Activated CD4-positive, alpha-beta T cell treated with anti-CD3 and anti-CD28 coated beads for 36 hours (primary cell): ENCODE measurements at regions of chr17 and their contacts with region 1.

Region 1: GRCh38 chr17:7021993-7022778 is 664 bp upstream of the BCL6B start:
- DNase-seq: peak; percentile 89
- ATAC-seq: peak; percentile 79
- H3K4me3 Mint-ChIP-seq: peak overlapping the region; percentile 44
- H3K27ac Mint-ChIP-seq: peak overlapping the region; percentile 55
- H3K4me1 Mint-ChIP-seq: peaks cover 43% of the 10 kb centered on the region
- H3K27me3 Mint-ChIP-seq: peaks cover 12% of the 10 kb centered on the region

Region 2: DNA sequence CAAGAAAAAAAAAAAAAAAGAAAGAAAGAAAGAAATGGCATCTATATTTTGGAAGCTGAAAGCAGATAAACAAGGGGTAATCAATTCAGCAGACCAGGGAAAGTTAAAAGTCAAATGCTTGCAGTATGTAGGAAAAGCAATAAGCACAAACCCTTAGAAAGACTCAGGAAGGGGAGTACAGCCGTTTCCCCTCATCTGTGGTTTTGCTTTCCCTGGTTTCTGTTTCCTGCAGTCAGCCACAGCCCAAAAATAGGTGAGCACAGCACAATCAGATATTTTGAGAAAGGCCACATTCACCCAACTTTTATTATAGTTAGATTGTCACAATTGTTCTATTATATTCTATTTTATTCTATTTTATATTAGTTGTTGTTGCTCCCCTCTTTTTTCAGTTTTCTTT is 40.8 kb before region 1 on chr17:
- CTCF ChIA-PET with region 1: no interaction called
- POLR2A ChIA-PET with region 1: no interaction called
- intact Hi-C with region 1: no loop called
- DNase-seq: no peak
- ATAC-seq: no peak
- H3K4me3 Mint-ChIP-seq: no peak overlapping the region
- H3K27ac Mint-ChIP-seq: no peak overlapping the region
- H3K4me1 Mint-ChIP-seq: peaks cover 12% of the 10 kb centered on the region
- H3K27me3 Mint-ChIP-seq: no peaks in the 10 kb centered on the region

Region 3: DNA sequence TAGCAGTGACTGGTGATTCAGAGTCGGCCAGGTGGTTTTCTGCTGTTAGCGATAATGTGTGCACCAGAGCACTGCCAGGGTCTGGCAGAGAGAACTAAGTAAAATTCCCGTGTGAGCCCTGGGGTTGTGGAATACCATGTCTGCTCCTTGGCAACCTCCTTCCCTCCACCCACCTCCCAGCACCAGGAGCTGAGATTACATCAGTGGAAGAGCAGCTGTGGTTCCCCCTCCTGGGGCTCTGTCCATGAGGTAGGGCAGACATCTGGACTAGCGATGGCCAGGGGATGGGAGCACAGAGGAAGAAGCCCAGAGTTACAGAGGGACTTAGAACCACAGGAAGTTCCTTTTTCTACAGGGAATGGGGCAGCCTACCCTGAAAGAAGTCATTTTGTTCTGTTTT is 42.1 kb after region 1 on chr17:
- CTCF ChIA-PET with region 1: no interaction called
- POLR2A ChIA-PET with region 1: no interaction called
- intact Hi-C with region 1: no loop called
- DNase-seq: no peak
- ATAC-seq: no peak
- H3K4me3 Mint-ChIP-seq: no peak overlapping the region
- H3K27ac Mint-ChIP-seq: no peak overlapping the region
- H3K4me1 Mint-ChIP-seq: peaks cover 19% of the 10 kb centered on the region
- H3K27me3 Mint-ChIP-seq: no peaks in the 10 kb centered on the region

Region 4: GRCh38 chr17:7204828-7205461 is 182.8 kb after region 1 on chr17:
- CTCF ChIA-PET with region 1: no interaction called
- POLR2A ChIA-PET with region 1: no interaction called
- intact Hi-C with region 1: loop called in 1 of 2 experiments (anchors 1 kb)
- DNase-seq: peak; percentile 95
- ATAC-seq: peak; percentile 92
- H3K4me3 Mint-ChIP-seq: peak overlapping the region; percentile 75
- H3K27ac Mint-ChIP-seq: peak overlapping the region; percentile 83
- H3K4me1 Mint-ChIP-seq: peaks cover 24% of the 10 kb centered on the region
- H3K27me3 Mint-ChIP-seq: no peaks in the 10 kb centered on the region

Region 5: GRCh38 chr17:7280519-7281429 is 258.6 kb after region 1 on chr17:
- CTCF ChIA-PET with region 1: no interaction called
- POLR2A ChIA-PET with region 1: no interaction called
- intact Hi-C with region 1: no loop called
- DNase-seq: peak; percentile 92
- ATAC-seq: peak; percentile 84
- H3K4me3 Mint-ChIP-seq: peak overlapping the region; percentile 70
- H3K27ac Mint-ChIP-seq: no peak overlapping the region
- H3K4me1 Mint-ChIP-seq: peaks cover 21% of the 10 kb centered on the region
- H3K27me3 Mint-ChIP-seq: peaks cover 17% of the 10 kb centered on the region

Region 6: GRCh38 chr17:7583253-7584109 is 561.3 kb after region 1 on chr17 and contains the start of gene MPDU1:
- CTCF ChIA-PET with region 1: no interaction called
- POLR2A ChIA-PET with region 1: no interaction called
- intact Hi-C with region 1: no loop called
- DNase-seq: peak; percentile 98
- ATAC-seq: peak; percentile 77
- H3K4me3 Mint-ChIP-seq: peak within 1 kb of the TSS; percentile 82
- H3K27ac Mint-ChIP-seq: peak within 1 kb of the TSS; percentile 100
- H3K4me1 Mint-ChIP-seq: peaks cover 56% of the 10 kb centered on the region
- H3K27me3 Mint-ChIP-seq: no peaks in the 10 kb centered on the region
- total RNA-seq, gene MPDU1: 51.7 to 77.0 TPM